Colonic mucosa (tissue), 4 donors: ENCODE measurements at regions of chr11 and their contacts with region 1.

Region 1: DNA sequence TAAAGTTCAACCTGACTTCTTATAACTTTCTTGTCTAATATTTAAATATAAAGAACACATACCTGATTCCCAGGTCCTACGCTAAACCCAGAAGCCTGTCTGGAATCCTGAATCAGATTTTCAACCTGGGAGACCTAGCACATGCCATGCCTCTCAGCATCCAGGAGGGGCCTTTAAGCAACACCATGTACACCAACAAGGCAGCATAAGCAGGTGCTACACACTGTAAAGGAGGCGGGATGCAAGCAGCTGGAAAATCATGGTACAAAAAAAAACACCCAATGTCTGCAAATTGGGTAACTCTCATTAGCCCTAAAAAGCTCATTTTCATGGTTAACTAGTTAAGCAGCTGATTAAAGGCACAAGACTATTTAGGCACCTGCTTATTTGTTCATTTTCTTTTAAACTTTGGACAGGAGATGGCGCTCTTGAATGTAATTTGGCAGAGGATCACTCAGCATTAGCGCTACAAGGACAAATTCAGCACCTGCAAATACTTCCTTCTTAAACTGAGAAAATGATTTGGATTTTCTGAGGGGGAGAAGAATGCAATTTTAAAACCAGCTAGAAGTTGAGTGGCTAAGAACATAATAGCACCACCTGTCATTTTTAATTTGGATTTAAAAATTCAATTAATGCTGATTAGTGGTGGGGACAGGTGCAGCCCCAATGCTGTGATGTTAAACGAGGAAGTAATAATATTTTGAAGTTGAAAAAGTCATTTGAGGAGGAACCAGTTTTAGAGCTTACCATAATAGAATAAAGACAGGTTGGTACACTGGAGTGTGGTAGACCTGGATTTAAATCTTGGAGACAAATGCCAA is 104.0 kb downstream of the FAR1 start:
- DNase-seq: peak; percentile 32
- H3K4me3 ChIP-seq: no peak overlapping the region
- H3K27ac ChIP-seq: no peak overlapping the region
- H3K4me1 ChIP-seq: no peaks in the 10 kb centered on the region
- H3K27me3 ChIP-seq: no peaks in the 10 kb centered on the region
- CTCF ChIP-seq: peak; percentile 36

Region 2: GRCh38 chr11:13949876-13950275 is 177.4 kb after region 1 on chr11:
- intact Hi-C with region 1: loop called (anchors 5 kb)
- DNase-seq: no peak
- H3K4me3 ChIP-seq: no peak overlapping the region
- H3K27ac ChIP-seq: no peak overlapping the region
- H3K4me1 ChIP-seq: no peaks in the 10 kb centered on the region
- H3K27me3 ChIP-seq: no peaks in the 10 kb centered on the region
- CTCF ChIP-seq: no peak

Region 3: DNA sequence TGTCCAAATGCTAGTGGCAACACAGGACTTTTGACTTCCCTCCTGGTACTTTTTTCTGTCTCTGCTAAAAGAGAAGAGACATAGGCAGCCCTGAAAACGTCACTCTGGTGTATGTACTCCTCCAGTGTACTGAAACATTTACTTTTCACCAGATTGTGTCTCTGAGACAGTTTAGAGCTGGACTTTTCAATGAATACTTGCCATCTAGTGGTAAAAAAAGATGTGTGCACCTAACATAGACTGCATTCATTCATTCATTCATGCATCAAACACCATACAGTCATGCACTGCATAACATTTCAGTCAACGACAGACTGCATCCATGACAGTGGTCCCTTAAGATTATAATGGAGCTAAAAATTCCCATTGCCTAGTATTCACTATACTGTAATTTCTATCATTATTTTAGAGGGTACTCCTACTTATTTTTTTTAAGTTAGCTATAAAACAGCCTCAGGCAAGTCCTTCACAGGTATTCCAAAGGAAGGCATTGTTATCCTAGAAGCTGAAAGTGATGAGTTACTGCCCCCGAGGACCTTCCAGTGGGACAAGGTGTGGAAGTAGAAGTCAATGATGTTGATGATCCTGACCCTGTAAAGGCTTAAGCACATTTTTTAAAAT is 376.3 kb after region 1 on chr11:
- intact Hi-C with region 1: loop called (anchors 10 kb)
- DNase-seq: no peak
- H3K4me3 ChIP-seq: no peak overlapping the region
- H3K27ac ChIP-seq: no peak overlapping the region
- H3K4me1 ChIP-seq: no peaks in the 10 kb centered on the region
- H3K27me3 ChIP-seq: no peaks in the 10 kb centered on the region
- CTCF ChIP-seq: peak; percentile 41

Region 4: GRCh38 chr11:14249121-14249963 is 476.9 kb after region 1 on chr11:
- intact Hi-C with region 1: loop called (anchors 5 kb)
- DNase-seq: peak; percentile 68
- H3K4me3 ChIP-seq: no peak overlapping the region
- H3K27ac ChIP-seq: no peak overlapping the region
- H3K4me1 ChIP-seq: no peaks in the 10 kb centered on the region
- H3K27me3 ChIP-seq: no peaks in the 10 kb centered on the region
- CTCF ChIP-seq: peak; percentile 91